ENCODE measurements at regions of chr17 and their contacts with region 1.

Region 1: DNA sequence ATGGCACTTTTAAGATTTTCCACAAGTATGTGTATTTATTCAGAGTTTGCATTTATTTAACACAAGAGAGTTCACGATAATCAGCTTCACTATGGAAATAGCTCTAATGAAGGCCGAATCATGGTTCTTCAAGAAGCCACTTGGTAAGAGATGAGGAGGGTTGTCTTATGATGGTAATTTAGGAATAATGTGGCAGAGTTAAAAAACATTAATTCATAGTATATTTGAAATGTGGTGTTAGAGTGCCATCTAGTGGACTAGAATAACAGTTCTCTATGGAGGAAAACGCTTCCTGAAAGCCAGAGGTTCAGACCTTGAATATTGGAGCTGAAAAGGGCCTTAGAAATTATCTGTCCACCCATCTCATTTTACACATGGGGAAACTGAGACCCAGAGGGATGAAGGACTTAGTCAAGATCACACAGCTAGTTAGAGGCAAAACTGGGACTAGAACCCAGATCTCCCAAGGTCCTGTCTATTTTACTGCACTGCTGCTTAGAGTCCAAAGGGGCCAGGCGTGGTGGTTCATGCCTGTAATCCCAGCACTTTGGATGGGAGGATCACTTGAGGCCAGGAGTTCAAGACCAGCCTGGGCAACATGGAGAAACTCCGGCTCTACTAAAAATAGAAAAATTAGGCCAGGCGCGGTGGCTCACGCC is 33.8 kb upstream of the KPNB1 start:
- DNase-seq: peak; percentile 72
- H3K4me3 ChIP-seq: no peak overlapping the region
- H3K27ac ChIP-seq: no peak overlapping the region
- H3K4me1 ChIP-seq: no peaks in the 10 kb centered on the region
- CTCF ChIP-seq: peak; percentile 96

Region 2: GRCh38 chr17:47363171-47363570 is 252.7 kb before region 1 on chr17:
- CTCF ChIA-PET with region 1: no interaction called
- POLR2A ChIA-PET with region 1: no interaction called
- intact Hi-C with region 1: loop called (anchors 1 kb)
- DNase-seq: no peak
- H3K4me3 ChIP-seq: no peak overlapping the region
- H3K27ac ChIP-seq: no peak overlapping the region
- H3K4me1 ChIP-seq: no peaks in the 10 kb centered on the region
- CTCF ChIP-seq: no peak

Region 3: GRCh38 chr17:47675380-47676198 is 59.7 kb after region 1 on chr17:
- CTCF ChIA-PET with region 1: no interaction called
- POLR2A ChIA-PET with region 1: no interaction called
- intact Hi-C with region 1: no loop called
- DNase-seq: no peak
- H3K4me3 ChIP-seq: no peak overlapping the region
- H3K27ac ChIP-seq: no peak overlapping the region
- H3K4me1 ChIP-seq: no peaks in the 10 kb centered on the region
- CTCF ChIP-seq: no peak

Region 4: DNA sequence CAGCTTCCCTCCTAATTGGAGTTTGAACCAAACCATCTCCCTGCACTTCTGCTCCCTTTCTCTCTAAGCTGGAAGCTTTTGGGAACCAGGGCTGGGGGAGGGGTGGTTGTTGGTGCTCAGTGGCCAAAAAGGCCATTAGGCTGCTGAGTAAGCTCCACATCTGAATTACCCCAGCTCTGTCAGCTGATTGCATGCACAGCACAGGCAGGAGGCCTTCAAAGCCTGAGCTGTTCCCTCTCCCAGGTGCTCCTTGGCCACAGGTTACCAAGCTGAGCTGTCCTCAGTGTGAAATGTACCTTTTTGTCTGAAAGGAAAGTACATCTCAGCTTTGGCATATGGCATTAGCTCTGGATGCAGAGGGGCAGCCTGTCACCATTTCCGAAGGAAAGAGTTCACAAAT is 71.9 kb after region 1 on chr17:
- CTCF ChIA-PET with region 1: no interaction called
- POLR2A ChIA-PET with region 1: no interaction called
- intact Hi-C with region 1: no loop called
- DNase-seq: no peak
- H3K4me3 ChIP-seq: no peak overlapping the region
- H3K27ac ChIP-seq: no peak overlapping the region
- H3K4me1 ChIP-seq: peaks cover 12% of the 10 kb centered on the region
- CTCF ChIP-seq: no peak

Measured in OCI-LY7 (cell line).